Activated CD4-positive, alpha-beta memory T cell treated with anti-CD3 and anti-CD28 coated beads for 36 hours (primary cell): ENCODE measurements at regions of chr14 and their contacts with region 1.

Region 1: GRCh38 chr14:64294672-64295413 is 672 bp upstream of the ESR2 start:
- DNase-seq: peak; percentile 91
- H3K4me3 Mint-ChIP-seq: peak overlapping the region; percentile 70
- H3K27ac Mint-ChIP-seq: no peak overlapping the region
- H3K4me1 Mint-ChIP-seq: peaks cover 29% of the 10 kb centered on the region
- H3K27me3 Mint-ChIP-seq: peaks cover 14% of the 10 kb centered on the region

Region 2: GRCh38 chr14:63470962-63471793 is 823.7 kb before region 1 on chr14:
- CTCF ChIA-PET with region 1: no interaction called
- POLR2A ChIA-PET with region 1: interaction called, 3 read pairs
- intact Hi-C with region 1: loop called (anchors 10 kb)
- DNase-seq: no peak
- H3K4me3 Mint-ChIP-seq: no peak overlapping the region
- H3K27ac Mint-ChIP-seq: no peak overlapping the region
- H3K4me1 Mint-ChIP-seq: peaks cover 49% of the 10 kb centered on the region
- H3K27me3 Mint-ChIP-seq: no peaks in the 10 kb centered on the region

Region 3: DNA sequence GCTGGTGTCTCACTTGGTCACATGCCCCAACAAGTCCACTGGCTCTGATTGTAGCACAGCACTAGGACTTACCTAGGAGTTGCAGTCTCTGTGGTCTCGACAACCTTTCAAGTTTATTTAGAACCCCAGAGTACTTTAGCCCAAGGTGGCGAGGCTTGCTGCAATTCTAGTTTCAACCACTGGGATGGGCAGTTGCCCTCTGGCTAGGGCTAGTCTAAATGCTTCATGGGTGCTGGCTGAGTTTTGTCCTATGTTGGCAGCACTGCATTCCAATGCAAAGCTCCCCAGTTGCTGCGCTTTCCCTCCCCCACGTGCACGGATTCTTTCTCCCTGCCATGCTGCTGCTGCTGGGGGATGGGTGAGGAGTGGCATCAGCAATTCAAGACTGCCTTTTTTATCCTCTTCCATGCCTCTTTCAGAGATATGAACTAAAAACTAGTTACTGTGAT is 234.2 kb before region 1 on chr14:
- CTCF ChIA-PET with region 1: no interaction called
- POLR2A ChIA-PET with region 1: no interaction called
- intact Hi-C with region 1: loop called (anchors 10 kb)
- DNase-seq: peak; percentile 31
- H3K4me3 Mint-ChIP-seq: no peak overlapping the region
- H3K27ac Mint-ChIP-seq: no peak overlapping the region
- H3K4me1 Mint-ChIP-seq: peaks cover 3% of the 10 kb centered on the region
- H3K27me3 Mint-ChIP-seq: no peaks in the 10 kb centered on the region

Region 4: GRCh38 chr14:64137657-64138290 is 157.1 kb before region 1 on chr14:
- CTCF ChIA-PET with region 1: interaction called, 13 read pairs
- POLR2A ChIA-PET with region 1: no interaction called
- intact Hi-C with region 1: no loop called
- DNase-seq: no peak
- H3K4me3 Mint-ChIP-seq: no peak overlapping the region
- H3K27ac Mint-ChIP-seq: no peak overlapping the region
- H3K4me1 Mint-ChIP-seq: no peaks in the 10 kb centered on the region
- H3K27me3 Mint-ChIP-seq: no peaks in the 10 kb centered on the region

Region 5: DNA sequence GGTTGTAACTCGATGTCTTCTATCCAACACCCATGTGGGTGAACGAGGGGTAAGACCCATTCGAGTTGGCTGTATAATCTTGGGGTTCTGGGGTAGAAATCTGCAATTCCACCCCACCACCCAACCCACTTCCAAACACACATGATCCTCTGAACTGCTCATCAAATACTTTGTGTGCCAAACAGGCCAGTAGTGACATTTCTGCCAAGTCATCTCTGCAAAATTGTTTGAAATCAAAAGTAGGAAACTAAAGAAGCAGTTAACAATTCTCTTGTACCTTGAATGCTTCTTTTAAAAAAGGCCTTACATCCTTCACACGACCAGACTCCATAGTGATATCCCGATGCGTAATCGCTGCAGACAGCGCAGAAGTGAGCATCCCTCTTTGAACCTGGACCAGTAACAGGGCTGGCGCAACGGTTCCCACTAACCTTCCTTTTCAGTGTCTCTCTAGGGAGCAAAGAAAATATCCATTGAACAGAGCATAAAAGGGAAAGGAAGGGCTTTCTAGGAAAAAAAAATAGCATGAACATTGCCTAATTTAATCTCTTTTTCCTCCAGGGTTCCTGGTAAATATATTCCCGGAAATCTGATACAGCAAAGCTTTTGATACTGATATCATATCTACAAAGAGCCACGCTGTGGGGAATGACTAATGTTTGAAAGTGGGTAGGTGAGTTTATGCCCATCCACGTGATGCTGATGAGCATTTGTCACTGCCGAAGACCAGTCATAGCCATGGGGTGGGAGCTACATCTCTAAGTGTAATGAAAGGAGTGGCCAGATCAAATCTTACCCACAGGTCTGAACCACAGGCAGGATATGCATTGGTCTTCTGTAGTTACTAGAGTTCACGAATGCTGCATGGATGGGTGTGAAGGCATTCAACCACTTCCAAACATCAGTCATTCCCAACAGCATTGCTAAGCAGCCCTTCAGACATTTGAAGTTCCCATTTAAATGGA is 14.9 kb before region 1 on chr14:
- CTCF ChIA-PET with region 1: interaction called, 12 read pairs
- POLR2A ChIA-PET with region 1: interaction called, 3 read pairs
- intact Hi-C with region 1: loop called (anchors 2 kb)
- DNase-seq: peak; percentile 55
- H3K4me3 Mint-ChIP-seq: no peak overlapping the region
- H3K27ac Mint-ChIP-seq: no peak overlapping the region
- H3K4me1 Mint-ChIP-seq: peaks cover 18% of the 10 kb centered on the region
- H3K27me3 Mint-ChIP-seq: no peaks in the 10 kb centered on the region

Region 6: DNA sequence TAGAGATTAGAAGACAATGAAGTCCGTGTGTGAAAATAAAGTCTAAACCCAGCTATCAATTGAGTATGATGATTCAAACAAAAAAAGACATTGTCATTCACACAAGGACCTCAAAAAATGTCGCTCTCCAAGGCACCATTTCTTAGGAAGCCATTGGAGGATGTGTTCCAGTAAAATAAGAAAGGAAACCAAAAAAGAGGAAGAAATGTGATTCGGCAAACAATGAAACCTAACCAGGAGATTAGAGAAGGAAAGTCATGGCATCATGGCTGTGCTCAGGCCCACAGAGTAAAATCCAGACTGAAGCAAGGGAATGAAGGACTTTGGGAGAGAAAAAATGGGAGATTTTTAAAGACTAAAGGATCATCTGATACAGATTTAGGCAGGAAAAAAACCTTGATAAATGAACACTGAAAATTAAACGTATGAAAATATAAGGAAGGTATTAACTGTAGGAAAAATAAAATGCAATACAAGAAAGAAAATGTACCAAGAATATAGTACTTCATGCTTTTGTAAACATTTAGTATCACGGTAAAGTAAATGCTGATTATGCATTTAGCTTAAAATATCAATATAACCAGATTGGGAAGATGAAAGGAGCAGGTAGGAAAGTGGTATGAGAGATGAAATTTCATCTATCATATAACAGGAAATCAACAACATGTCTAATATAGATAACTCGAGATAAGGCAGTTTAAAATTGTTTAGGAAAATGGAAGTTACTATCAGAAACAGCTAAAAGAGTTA is 55.1 kb after region 1 on chr14:
- CTCF ChIA-PET with region 1: no interaction called
- POLR2A ChIA-PET with region 1: no interaction called
- intact Hi-C with region 1: no loop called
- DNase-seq: no peak
- H3K4me3 Mint-ChIP-seq: no peak overlapping the region
- H3K27ac Mint-ChIP-seq: no peak overlapping the region
- H3K4me1 Mint-ChIP-seq: no peaks in the 10 kb centered on the region
- H3K27me3 Mint-ChIP-seq: no peaks in the 10 kb centered on the region